Mammary epithelial cell (primary cell): ENCODE measurements at regions of chr16 and their contacts with region 1.

Region 1: DNA sequence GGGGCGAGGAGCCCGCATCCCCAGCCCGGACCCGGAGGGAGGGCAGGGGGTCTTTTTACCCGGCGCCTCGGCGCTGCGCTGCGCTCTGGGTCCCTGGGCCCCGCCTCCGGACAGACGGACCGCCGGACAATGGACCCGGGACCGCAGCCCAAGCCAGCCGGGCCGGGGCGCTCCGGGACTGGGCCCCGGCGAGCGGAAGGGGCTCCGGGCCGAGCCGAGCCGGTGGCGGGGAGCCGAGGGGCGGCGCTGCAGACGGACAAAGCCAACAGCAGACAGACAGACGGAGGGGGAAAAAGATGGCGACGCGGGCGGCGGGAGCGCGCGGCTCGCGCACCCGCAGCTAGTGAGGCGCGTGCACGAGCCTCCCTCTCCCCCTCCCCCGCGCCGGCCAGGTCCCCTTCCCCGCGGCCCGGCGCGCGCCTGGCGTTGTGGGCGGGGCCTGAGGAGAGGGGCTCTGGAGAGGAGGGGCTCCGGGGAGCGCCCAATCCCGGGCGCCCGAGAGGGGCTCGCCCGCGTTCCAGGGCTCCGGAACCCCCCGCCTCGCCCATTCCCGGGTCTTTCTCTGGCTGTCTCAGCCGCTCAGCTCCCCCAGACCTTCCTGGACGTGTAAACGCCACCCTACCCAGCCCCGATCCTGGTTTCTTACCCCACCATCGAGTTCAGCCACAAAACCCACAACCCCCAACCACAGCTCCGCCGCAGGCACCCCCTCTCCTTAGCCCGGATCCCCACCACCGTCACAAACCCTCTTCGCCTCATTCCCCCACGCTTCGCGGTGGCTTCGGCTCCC is at the start of gene ZNF821:
- DNase-seq: peak; percentile 54
- H3K4me3 ChIP-seq: peak within 1 kb of the TSS; percentile 77 to 82 (median 79)
- H3K27ac ChIP-seq: peak within 1 kb of the TSS; percentile 32
- H3K4me1 ChIP-seq: peaks cover 10% of the 10 kb centered on the region
- H3K27me3 ChIP-seq: no peaks in the 10 kb centered on the region
- CTCF ChIP-seq: peak in 1 of 2 donors; percentile 42
- total RNA-seq, gene ZNF821: 5.6 to 6.2 TPM

Region 2: GRCh38 chr16:71781741-71782140 is 102.3 kb before region 1 on chr16:
- CTCF ChIA-PET with region 1: no interaction called
- dilution Hi-C with region 1: no loop called
- in situ Hi-C with region 1: no loop called
- intact Hi-C with region 1: loop called (anchors 5 kb)
- DNase-seq: peak; percentile 17
- H3K4me3 ChIP-seq: no peak overlapping the region
- H3K27ac ChIP-seq: no peak overlapping the region
- H3K4me1 ChIP-seq: peaks cover 4% of the 10 kb centered on the region
- H3K27me3 ChIP-seq: no peaks in the 10 kb centered on the region
- CTCF ChIP-seq: no peak

Region 3: GRCh38 chr16:71808593-71809459 is 75.2 kb before region 1 on chr16 and contains the start of gene AP1G1:
- CTCF ChIA-PET with region 1: no interaction called
- dilution Hi-C with region 1: no loop called
- in situ Hi-C with region 1: no loop called
- intact Hi-C with region 1: loop called (anchors 2 kb)
- DNase-seq: peak; percentile 98
- H3K4me3 ChIP-seq: peak within 1 kb of the TSS; percentile 85 to 99 (median 90)
- H3K27ac ChIP-seq: peak within 1 kb of the TSS; percentile 100
- H3K4me1 ChIP-seq: peaks cover 10% of the 10 kb centered on the region
- H3K27me3 ChIP-seq: no peaks in the 10 kb centered on the region
- CTCF ChIP-seq: no peak
- total RNA-seq, gene AP1G1: 80.1 to 95.4 TPM

Region 4: DNA sequence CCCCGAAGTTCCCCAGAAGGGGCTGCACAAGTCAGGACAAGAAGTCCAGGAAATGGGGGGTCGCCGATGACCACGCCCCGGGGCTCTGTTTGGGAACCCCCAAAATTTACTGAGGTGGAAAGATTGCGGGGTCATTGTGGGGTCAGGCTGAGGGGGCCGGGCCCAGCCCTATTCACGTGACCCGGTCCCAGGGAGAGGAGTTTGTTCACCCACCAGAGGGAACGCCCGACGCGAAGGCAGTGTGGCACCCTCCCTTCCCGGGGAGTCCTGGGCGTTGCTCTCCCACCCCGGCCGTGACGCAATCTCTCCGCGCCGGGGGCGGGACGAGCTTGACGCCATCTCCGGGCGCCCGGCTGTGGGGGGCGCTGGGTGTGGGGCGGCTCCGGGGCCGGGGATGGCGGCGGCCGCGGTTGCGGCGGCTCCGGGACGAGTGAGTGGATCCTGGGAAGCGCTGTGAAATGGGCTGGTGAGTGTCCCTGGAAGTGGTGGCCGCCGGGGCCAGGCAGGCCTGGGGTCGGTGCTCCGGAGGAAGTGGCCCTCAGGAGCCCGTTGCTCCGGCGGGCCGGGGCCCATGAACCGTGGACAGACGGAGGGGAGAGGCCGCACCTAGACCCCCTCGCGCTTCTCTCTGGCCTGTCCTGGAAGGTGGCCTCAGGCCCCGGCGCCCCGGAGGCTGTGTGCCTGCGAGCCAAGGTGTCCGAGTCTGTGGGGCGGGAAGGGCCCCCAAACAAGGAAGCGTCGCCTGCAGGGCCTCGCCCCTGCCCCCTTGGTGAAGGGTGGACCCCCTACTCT is 38.2 kb before region 1 on chr16 and contains the start of gene ATXN1L:
- CTCF ChIA-PET with region 1: no interaction called
- dilution Hi-C with region 1: loop called (anchors 5 kb)
- in situ Hi-C with region 1: no loop called
- intact Hi-C with region 1: loop called (anchors 5 kb)
- DNase-seq: peak; percentile 91
- H3K4me3 ChIP-seq: peak within 1 kb of the TSS; percentile 85 to 97 (median 95)
- H3K27ac ChIP-seq: peak within 1 kb of the TSS; percentile 90
- H3K4me1 ChIP-seq: peaks cover 11% of the 10 kb centered on the region
- H3K27me3 ChIP-seq: no peaks in the 10 kb centered on the region
- CTCF ChIP-seq: no peak
- total RNA-seq, gene ATXN1L: 15.5 to 16.7 TPM

Region 5: GRCh38 chr16:71865173-71865863 is 18.7 kb before region 1 on chr16:
- CTCF ChIA-PET with region 1: no interaction called
- dilution Hi-C with region 1: no loop called
- in situ Hi-C with region 1: no loop called
- intact Hi-C with region 1: no loop called
- DNase-seq: no peak
- H3K4me3 ChIP-seq: no peak overlapping the region
- H3K27ac ChIP-seq: no peak overlapping the region
- H3K4me1 ChIP-seq: no peaks in the 10 kb centered on the region
- H3K27me3 ChIP-seq: no peaks in the 10 kb centered on the region
- CTCF ChIP-seq: no peak

Region 6: DNA sequence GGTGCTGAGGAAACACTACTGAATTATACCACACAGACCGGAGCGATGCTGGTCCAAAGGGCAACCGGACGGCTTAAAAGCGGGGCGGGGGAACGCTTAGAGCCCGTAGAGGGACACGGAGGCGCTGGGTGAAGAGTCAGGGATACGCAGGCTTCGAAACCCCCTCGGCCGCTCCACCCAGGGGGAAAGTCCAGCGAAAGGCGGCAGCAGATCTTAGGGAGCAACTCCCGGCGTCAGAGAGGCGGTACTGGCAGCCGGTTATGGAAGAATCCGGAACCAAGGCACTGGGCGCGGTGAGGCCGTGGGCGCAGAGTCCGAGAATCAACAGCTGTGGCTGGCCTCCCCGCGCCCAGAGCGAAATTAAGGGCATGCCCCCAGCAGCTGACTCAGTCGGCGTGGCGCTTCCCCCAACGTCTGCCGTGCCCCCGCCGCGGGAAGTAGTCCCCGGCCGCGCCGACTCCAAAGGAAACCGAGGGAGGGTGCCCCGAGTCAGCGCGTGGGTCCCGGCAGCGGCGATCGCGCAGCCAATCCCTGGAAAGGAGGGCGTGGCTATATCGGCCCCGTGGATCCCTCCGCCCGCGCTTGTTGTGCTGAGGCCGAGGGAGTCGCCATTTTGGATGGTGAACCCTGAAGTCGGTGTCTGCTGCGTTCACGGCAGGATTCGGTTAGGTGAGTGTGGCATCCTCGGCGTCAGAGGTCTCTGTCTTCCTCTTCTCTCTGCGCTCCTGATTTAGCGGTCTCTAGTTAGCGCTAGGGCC is 11.1 kb after region 1 on chr16 and contains the start of gene IST1:
- CTCF ChIA-PET with region 1: no interaction called
- dilution Hi-C with region 1: no loop called
- in situ Hi-C with region 1: no loop called
- intact Hi-C with region 1: loop called (anchors 1 kb)
- DNase-seq: peak; percentile 98
- H3K4me3 ChIP-seq: peak within 1 kb of the TSS; percentile 85 to 96 (median 87)
- H3K27ac ChIP-seq: peak within 1 kb of the TSS; percentile 87
- H3K4me1 ChIP-seq: peaks cover 15% of the 10 kb centered on the region
- H3K27me3 ChIP-seq: no peaks in the 10 kb centered on the region
- CTCF ChIP-seq: no peak
- total RNA-seq, gene IST1: 123 to 203 TPM

Region 7: GRCh38 chr16:71919035-71919434 is 35.0 kb after region 1 on chr16:
- CTCF ChIA-PET with region 1: no interaction called
- dilution Hi-C with region 1: no loop called
- in situ Hi-C with region 1: no loop called
- intact Hi-C with region 1: no loop called
- DNase-seq: no peak
- H3K4me3 ChIP-seq: no peak overlapping the region
- H3K27ac ChIP-seq: no peak overlapping the region
- H3K4me1 ChIP-seq: peaks cover 4% of the 10 kb centered on the region
- H3K27me3 ChIP-seq: no peaks in the 10 kb centered on the region
- CTCF ChIP-seq: no peak

Region 8: GRCh38 chr16:72099377-72099818 is 215.4 kb after region 1 on chr16:
- CTCF ChIA-PET with region 1: no interaction called
- dilution Hi-C with region 1: no loop called
- in situ Hi-C with region 1: no loop called
- intact Hi-C with region 1: loop called (anchors 2 kb)
- DNase-seq: peak; percentile 45
- H3K4me3 ChIP-seq: no peak overlapping the region
- H3K27ac ChIP-seq: no peak overlapping the region
- H3K4me1 ChIP-seq: peaks cover 17% of the 10 kb centered on the region
- H3K27me3 ChIP-seq: no peaks in the 10 kb centered on the region
- CTCF ChIP-seq: peak; percentile 52 to 56